Activated CD4-positive, alpha-beta memory T cell treated with anti-CD3 and anti-CD28 coated beads for 36 hours (primary cell): ENCODE measurements at regions of chr1 and their contacts with region 1.

Region 1: GRCh38 chr1:164786980-164787833 is 228.2 kb downstream of the PBX1 start:
- DNase-seq: peak; percentile 69
- H3K4me3 Mint-ChIP-seq: no peak overlapping the region
- H3K27ac Mint-ChIP-seq: no peak overlapping the region
- H3K4me1 Mint-ChIP-seq: no peaks in the 10 kb centered on the region
- H3K27me3 Mint-ChIP-seq: peaks cover 1% of the 10 kb centered on the region

Region 2: DNA sequence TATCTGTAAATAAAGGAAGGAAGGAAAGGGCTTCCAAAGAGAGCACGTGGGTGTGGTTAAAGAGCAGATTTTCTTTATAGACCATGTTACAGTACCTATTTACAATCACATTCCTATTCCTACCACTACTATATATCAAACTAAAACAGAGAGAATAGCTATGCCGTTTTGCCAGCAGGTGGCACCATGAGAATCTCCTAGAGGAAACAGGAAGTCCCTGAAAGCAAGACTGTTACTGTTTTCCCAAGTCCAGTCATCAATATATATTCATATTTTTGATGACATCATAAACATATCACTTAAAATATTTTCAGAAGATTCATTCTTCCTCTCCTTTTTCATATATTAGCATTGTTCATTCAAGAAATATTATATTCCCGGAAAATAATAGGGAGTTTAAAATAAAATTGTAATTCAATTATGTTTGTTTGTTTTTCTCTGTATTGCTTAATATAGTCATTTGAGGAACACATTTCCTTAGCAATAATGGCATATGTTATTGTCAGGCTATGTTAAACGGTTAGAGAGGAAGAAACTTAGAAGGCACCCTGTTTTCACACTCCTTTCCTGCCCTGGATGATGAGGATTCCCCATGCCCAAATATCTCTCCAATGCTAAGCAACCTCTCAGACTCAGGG is 1932.8 kb before region 1 on chr1:
- CTCF ChIA-PET with region 1: no interaction called
- POLR2A ChIA-PET with region 1: no interaction called
- intact Hi-C with region 1: loop called (anchors 5 kb)
- DNase-seq: peak; percentile 63
- H3K4me3 Mint-ChIP-seq: no peak overlapping the region
- H3K27ac Mint-ChIP-seq: no peak overlapping the region
- H3K4me1 Mint-ChIP-seq: no peaks in the 10 kb centered on the region
- H3K27me3 Mint-ChIP-seq: peaks cover 1% of the 10 kb centered on the region

Region 3: DNA sequence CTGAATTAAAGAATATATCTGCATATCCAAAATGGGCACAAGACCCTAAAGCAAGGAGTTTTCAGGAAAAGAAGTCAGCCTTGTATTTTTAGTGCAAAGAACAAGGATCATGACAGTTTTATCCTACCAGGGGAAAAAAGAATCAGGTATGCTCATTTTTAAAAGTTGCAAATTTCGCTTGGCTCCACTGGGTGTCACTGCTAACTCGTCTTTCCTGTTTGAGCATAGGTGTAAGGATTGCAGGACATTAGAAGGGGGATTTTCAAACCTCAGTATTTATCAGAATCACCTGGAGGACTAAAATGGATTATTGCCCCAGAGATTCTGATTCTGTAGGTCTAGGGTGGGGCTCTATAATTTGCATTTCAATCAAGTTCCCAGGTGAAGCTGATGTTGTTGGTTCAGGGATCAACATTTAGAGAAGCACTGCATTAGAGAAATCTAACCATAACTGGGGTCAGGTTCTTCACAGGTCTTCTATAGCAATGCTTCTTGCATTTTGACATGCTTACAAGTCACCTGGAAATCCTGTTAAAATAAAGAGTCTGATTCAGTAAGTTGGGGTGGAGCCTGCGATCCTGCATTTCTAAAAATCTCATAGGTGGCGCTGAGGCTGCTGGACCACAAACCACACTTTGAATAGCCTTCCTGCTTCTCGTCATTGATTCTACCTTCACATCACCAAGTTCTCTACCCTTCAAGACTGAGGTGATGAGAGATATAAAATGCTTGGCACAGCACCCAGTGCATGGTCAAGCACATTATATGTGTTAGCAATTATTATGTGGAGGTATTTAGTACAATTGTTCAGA is 1425.9 kb before region 1 on chr1:
- CTCF ChIA-PET with region 1: interaction called, 3 read pairs
- POLR2A ChIA-PET with region 1: no interaction called
- intact Hi-C with region 1: loop called (anchors 5 kb)
- DNase-seq: peak; percentile 16
- H3K4me3 Mint-ChIP-seq: no peak overlapping the region
- H3K27ac Mint-ChIP-seq: no peak overlapping the region
- H3K4me1 Mint-ChIP-seq: peaks cover 6% of the 10 kb centered on the region
- H3K27me3 Mint-ChIP-seq: peaks cover 5% of the 10 kb centered on the region

Region 4: DNA sequence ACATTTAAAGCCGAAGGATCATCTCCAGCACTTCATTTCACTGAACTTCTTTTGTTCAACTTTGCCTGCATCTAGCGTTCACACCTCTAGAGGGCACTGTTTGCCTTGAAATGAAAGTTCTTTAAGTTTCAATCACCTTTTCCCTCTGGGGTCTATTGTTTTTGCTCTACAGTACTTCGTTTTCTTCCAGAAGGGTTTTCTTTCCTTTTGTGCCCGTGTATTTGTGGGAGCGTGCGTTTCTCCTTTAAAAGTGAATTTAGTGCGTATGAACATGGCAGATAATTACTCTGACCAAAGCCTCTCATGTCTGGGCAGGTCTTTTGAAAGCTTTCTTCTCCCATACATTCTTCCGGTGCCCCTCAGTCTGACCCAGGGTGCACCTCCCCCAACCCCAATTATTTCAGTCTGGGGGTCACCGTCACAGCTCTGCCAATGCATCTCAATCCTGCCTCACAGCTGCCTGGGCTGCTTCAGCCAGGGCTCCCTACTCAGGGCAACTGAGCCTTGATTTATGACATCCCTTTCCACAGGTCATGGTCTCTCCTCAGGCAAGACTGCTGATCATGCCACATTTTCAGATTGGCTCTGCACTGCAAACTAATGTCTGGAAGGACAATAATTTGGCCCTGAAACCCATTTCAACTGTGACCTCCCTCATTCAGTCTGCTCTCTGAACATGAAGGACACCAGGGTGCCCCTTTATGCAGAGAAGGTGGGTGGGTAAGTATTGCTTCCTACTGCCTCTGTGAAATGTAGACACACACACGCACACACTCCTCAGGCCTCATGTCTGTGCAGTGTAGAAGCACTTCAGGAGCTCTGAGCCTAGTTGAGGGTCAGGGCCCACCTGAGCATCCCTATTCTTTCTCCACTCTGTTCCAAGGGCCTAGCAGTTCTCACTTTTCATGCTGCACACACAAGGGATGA is 1376.9 kb before region 1 on chr1:
- CTCF ChIA-PET with region 1: interaction called, 3 read pairs
- POLR2A ChIA-PET with region 1: no interaction called
- intact Hi-C with region 1: loop called (anchors 1 kb)
- DNase-seq: peak; percentile 32
- H3K4me3 Mint-ChIP-seq: no peak overlapping the region
- H3K27ac Mint-ChIP-seq: no peak overlapping the region
- H3K4me1 Mint-ChIP-seq: peaks cover 8% of the 10 kb centered on the region
- H3K27me3 Mint-ChIP-seq: peaks cover 9% of the 10 kb centered on the region

Region 5: DNA sequence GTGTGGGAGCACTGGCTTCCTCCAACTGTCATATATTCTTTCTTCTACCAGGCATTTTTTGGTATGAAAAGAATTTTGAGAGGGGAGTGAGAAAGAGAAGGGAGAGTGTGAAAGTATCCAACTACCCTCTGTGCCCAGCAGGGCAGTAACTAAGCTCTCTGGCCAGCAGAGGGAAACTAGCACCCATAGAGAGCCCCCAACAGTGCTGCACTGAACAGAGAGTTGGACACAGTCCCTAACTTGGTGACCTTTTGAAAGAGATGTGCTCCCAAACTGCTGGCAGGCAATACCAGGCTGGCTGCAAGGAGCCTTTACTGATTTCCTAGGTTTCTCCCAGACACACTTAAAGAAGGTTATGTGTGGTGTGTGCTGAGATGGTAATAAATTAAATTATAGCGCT is 347.0 kb before region 1 on chr1:
- CTCF ChIA-PET with region 1: no interaction called
- POLR2A ChIA-PET with region 1: no interaction called
- intact Hi-C with region 1: no loop called
- DNase-seq: no peak
- H3K4me3 Mint-ChIP-seq: no peak overlapping the region
- H3K27ac Mint-ChIP-seq: no peak overlapping the region
- H3K4me1 Mint-ChIP-seq: no peaks in the 10 kb centered on the region
- H3K27me3 Mint-ChIP-seq: no peaks in the 10 kb centered on the region

Region 6: DNA sequence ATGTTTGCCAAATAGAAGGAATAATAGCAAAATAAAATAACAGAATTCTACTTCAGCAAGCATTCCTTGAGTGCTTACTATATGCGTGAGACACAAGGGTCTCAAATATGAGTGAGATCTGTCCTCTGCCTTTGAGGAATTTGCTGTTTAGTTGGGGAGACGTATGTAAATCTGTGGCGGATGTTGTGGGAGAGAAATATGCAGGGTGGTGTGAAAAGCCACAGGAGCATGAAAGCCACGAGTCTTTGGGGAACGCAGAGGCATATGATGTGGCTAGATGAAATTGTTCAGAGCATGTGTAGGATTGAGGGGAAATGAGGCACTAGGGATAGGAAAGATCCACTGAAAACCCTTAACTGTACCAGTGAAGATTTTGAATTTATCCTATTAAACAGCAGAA is 16.2 kb after region 1 on chr1:
- CTCF ChIA-PET with region 1: interaction called, 18 read pairs
- POLR2A ChIA-PET with region 1: no interaction called
- intact Hi-C with region 1: no loop called
- DNase-seq: no peak
- H3K4me3 Mint-ChIP-seq: no peak overlapping the region
- H3K27ac Mint-ChIP-seq: no peak overlapping the region
- H3K4me1 Mint-ChIP-seq: no peaks in the 10 kb centered on the region
- H3K27me3 Mint-ChIP-seq: no peaks in the 10 kb centered on the region

Region 7: GRCh38 chr1:164886101-164886500 is 98.9 kb after region 1 on chr1:
- CTCF ChIA-PET with region 1: no interaction called
- POLR2A ChIA-PET with region 1: no interaction called
- intact Hi-C with region 1: no loop called
- DNase-seq: no peak
- H3K4me3 Mint-ChIP-seq: no peak overlapping the region
- H3K27ac Mint-ChIP-seq: no peak overlapping the region
- H3K4me1 Mint-ChIP-seq: no peaks in the 10 kb centered on the region
- H3K27me3 Mint-ChIP-seq: no peaks in the 10 kb centered on the region

Region 8: DNA sequence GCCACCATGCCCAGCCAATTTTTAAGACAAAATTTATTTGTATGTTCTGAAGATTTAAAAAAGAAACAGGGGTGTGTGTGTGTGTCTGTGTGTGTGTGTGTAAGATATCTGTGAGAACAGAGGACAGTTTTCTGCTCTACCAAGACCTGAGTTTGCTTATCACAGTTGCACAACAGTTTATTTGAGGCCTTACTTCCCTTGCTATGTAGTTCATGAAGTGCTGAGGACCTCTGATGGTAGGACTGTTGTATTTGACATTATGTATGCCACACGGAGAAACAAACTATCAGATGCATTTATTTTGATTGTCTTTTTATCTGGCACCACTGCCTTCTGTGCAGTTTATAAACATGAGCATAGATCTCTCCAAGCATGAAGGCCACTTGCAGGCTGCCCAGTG is 127.0 kb after region 1 on chr1:
- CTCF ChIA-PET with region 1: no interaction called
- POLR2A ChIA-PET with region 1: no interaction called
- intact Hi-C with region 1: no loop called
- DNase-seq: no peak
- H3K4me3 Mint-ChIP-seq: no peak overlapping the region
- H3K27ac Mint-ChIP-seq: no peak overlapping the region
- H3K4me1 Mint-ChIP-seq: no peaks in the 10 kb centered on the region
- H3K27me3 Mint-ChIP-seq: no peaks in the 10 kb centered on the region